Natural killer cell (primary cell): ENCODE measurements at regions of chr11 and their contacts with region 1.

Region 1: GRCh38 chr11:64894070-64894796 is 15.8 kb upstream of the EHD1 start:
- DNase-seq: peak; percentile 93 to 95
- ATAC-seq: peak; percentile 75 to 87 (median 78)
- H3K4me3 ChIP-seq: no peak overlapping the region
- H3K4me3 Mint-ChIP-seq: no peak overlapping the region
- H3K27ac ChIP-seq: no peak overlapping the region
- H3K27ac Mint-ChIP-seq: peak overlapping the region in 1 of 2 donors; percentile 58
- H3K4me1 ChIP-seq: peaks cover 17% of the 10 kb centered on the region
- H3K4me1 Mint-ChIP-seq: peaks cover 0 to 8% of the 10 kb centered on the region in 2 donors
- H3K27me3 ChIP-seq: no peaks in the 10 kb centered on the region
- H3K27me3 Mint-ChIP-seq: no peaks in the 10 kb centered on the region
- CTCF ChIP-seq: peak; percentile 79

Region 2: DNA sequence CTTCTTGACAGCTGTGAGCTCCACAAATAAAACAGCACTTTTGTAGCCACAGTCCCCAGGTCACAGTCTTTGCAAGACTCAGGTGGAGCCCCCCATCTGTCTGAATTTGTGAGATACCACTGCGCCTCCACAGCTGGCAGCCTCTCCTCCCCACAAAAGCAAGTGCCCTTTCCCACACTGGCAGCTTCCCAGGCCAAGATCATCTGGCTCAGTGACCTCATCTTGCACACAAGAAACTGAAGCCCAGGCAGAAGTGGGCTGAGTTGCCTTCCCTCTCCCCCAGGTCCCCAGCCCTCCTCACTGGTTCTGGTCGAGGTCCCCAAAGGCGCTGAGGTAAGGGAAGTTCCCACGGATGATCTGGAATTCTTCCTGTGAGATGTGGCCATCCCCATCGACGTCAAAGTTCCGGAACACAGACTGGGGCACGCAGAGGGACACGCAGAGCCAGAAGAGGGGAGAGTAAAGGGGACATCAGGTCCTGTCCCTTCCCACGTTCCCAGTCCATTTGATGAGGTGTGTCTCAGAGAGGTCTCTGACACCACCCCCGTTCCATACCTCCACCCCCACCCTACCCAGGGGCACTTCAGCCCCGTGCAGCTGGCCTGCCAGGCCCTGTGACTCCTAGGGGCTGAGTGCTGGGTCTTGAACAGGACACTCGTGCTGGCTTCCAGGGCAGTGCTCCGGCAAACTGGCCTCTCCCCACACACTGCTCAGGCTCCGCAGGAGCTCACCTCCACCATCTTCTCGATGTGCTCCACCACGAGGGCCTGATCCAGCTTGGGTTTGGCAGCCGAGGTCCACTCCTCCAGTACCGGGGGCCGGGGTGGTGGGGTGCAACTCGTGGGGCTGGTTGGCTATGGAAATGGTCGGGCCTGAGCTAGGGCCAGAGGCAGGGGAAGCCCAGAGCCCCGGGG is 159.2 kb before region 1 on chr11:
- intact Hi-C with region 1: no loop called
- DNase-seq: no peak
- ATAC-seq: no peak
- H3K4me3 ChIP-seq: no peak overlapping the region
- H3K4me3 Mint-ChIP-seq: no peak overlapping the region
- H3K27ac ChIP-seq: no peak overlapping the region
- H3K27ac Mint-ChIP-seq: peak overlapping the region in 1 of 2 donors; percentile 49
- H3K4me1 ChIP-seq: peaks cover 11% of the 10 kb centered on the region
- H3K4me1 Mint-ChIP-seq: peaks cover 8 to 21% of the 10 kb centered on the region in 2 donors
- H3K27me3 ChIP-seq: no peaks in the 10 kb centered on the region
- H3K27me3 Mint-ChIP-seq: no peaks in the 10 kb centered on the region
- CTCF ChIP-seq: no peak

Region 3: DNA sequence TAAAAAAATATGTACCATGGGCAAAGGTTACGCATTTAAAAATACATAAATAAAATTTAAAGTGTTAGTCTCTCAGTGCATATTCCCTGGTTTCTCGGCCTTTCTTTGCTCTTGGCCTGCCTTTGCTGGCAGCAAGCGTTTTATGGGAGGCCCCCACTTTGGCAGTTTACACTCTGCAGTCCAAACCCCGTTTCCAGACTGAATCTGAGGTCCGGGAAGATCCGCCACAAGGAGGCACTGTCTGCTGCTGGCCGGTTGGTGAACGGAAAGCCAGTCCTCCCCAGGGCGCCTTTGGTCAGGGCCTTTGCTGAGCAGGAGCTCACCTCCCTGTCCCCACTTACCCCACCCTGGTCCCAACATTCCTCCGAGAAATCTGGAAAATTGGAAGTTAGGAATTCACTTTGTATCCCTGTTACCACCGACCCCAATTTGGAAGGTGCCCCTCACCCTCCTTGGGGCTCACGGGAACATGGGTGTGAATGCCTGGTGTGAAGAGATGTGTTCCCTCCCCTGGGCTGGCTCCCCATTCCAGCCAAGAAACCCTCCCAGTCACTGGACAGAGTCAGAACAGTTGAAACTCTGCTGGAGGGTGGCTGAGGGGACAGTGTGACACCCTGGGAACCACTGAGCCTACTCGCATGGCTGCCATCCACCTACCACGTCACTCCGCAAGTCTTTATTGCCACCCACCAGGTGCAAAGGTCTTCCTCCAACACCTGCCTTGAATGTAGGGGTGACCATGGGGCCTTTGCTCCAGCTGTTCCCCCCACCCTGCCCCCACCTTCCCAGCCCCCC is 106.5 kb before region 1 on chr11:
- intact Hi-C with region 1: loop called (anchors 1 kb)
- DNase-seq: peak; percentile 55 to 77
- ATAC-seq: peak; percentile 67 to 92 (median 78)
- H3K4me3 ChIP-seq: no peak overlapping the region
- H3K4me3 Mint-ChIP-seq: no peak overlapping the region
- H3K27ac ChIP-seq: no peak overlapping the region
- H3K27ac Mint-ChIP-seq: no peak overlapping the region
- H3K4me1 ChIP-seq: no peaks in the 10 kb centered on the region
- H3K4me1 Mint-ChIP-seq: no peaks in the 10 kb centered on the region
- H3K27me3 ChIP-seq: no peaks in the 10 kb centered on the region
- H3K27me3 Mint-ChIP-seq: no peaks in the 10 kb centered on the region
- CTCF ChIP-seq: peak; percentile 65